CD4-positive, alpha-beta memory T cell (primary cell): ENCODE measurements at regions of chr16 and their contacts with region 1.

Region 1: DNA sequence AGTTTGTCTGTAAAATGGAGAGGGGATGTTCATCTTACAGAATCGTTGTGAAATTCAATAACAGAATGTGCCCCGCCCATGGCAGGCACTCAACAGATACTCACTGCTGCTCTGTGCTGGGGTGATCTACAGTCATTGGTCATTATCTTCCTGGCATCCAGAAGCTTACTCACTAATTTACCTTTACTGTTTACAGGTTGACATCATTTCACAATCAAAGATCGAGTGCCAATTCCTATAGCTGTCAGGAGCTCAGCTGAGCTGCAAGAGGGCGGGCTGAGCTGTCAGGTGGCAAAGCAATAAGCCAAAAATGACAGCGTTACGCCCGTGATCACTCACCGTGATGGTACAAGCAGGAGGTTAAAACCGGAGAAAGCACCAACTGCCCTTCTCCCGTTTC is 51.2 kb downstream of the LITAF start:
- DNase-seq: no peak
- H3K4me3 ChIP-seq: no peak overlapping the region
- H3K4me3 Mint-ChIP-seq: no peak overlapping the region
- H3K27ac ChIP-seq: no peak overlapping the region
- H3K27ac Mint-ChIP-seq: no peak overlapping the region
- H3K4me1 ChIP-seq: no peaks in the 10 kb centered on the region
- H3K4me1 Mint-ChIP-seq: peaks cover 5 to 11% (median 10%) of the 10 kb centered on the region in 4 donors
- H3K27me3 ChIP-seq: no peaks in the 10 kb centered on the region
- H3K27me3 Mint-ChIP-seq: no peaks in the 10 kb centered on the region

Region 2: GRCh38 chr16:11396241-11397048 is 139.0 kb before region 1 on chr16:
- CTCF ChIA-PET with region 1: interaction called, 5 read pairs
- POLR2A ChIA-PET with region 1: no interaction called
- intact Hi-C with region 1: loop called (anchors 2 kb)
- DNase-seq: peak; percentile 51 to 65 (median 54)
- H3K4me3 ChIP-seq: no peak overlapping the region
- H3K4me3 Mint-ChIP-seq: no peak overlapping the region
- H3K27ac ChIP-seq: no peak overlapping the region
- H3K27ac Mint-ChIP-seq: peak overlapping the region in 1 of 7 donors; percentile 24
- H3K4me1 ChIP-seq: peaks cover 5% of the 10 kb centered on the region
- H3K4me1 Mint-ChIP-seq: peaks cover 0 to 5% (median 1%) of the 10 kb centered on the region in 4 donors
- H3K27me3 ChIP-seq: no peaks in the 10 kb centered on the region
- H3K27me3 Mint-ChIP-seq: no peaks in the 10 kb centered on the region

Region 3: GRCh38 chr16:11407047-11407982 is 128.2 kb before region 1 on chr16:
- CTCF ChIA-PET with region 1: interaction called, 12 read pairs
- POLR2A ChIA-PET with region 1: no interaction called
- intact Hi-C with region 1: loop called (anchors 1 kb)
- DNase-seq: peak; percentile 61 to 75 (median 67)
- H3K4me3 ChIP-seq: no peak overlapping the region
- H3K4me3 Mint-ChIP-seq: peak overlapping the region in 1 of 8 donors; percentile 48
- H3K27ac ChIP-seq: no peak overlapping the region
- H3K27ac Mint-ChIP-seq: peak overlapping the region in 2 of 7 donors; percentile 80 to 84
- H3K4me1 ChIP-seq: no peaks in the 10 kb centered on the region
- H3K4me1 Mint-ChIP-seq: peaks cover 0 to 6% (median 4%) of the 10 kb centered on the region in 4 donors
- H3K27me3 ChIP-seq: no peaks in the 10 kb centered on the region
- H3K27me3 Mint-ChIP-seq: no peaks in the 10 kb centered on the region

Region 4: DNA sequence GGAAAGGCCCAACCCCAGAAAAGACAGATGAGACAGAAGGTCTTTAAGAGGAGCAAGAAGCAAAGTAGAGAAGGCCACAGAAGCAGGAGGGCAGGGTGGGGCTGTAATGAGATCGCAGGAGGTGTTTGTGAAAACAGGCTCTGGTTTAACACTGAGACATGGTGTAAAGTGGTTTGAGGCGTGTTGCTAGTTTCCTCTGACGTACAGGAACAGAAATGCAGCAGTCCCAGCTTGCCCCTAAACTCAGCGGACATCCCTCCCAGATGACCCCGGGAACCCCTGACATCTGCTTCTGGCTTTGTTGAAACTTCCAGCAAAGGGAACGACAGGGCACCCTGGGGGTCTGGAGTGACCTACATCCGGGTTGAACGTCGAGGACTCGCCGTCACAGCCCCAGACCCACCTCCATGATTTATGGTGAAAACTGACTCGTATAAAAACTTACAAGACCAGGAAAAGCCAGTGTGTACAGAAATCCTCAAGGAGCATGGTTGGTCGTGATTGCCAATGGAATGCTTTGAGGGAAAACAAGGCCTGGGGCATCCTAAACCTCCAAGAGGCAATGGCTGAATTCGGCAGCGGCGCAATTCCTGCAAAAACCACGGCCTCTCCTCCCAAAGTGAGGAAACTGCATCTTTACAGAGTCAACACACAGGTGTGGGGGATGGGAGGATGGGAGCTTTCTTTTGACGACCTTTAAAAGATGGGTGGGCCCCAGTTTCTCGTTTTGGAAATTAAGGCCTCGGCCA is 25.4 kb after region 1 on chr16:
- CTCF ChIA-PET with region 1: interaction called, 22 read pairs
- POLR2A ChIA-PET with region 1: interaction called, 6 read pairs
- intact Hi-C with region 1: loop called (anchors 1 kb)
- DNase-seq: peak; percentile 84 to 95 (median 86)
- H3K4me3 ChIP-seq: peak overlapping the region; percentile 37 to 60
- H3K4me3 Mint-ChIP-seq: peak overlapping the region; percentile 59 to 91 (median 79)
- H3K27ac ChIP-seq: peak overlapping the region; percentile 86
- H3K27ac Mint-ChIP-seq: peak overlapping the region; percentile 92 to 100 (median 95)
- H3K4me1 ChIP-seq: peaks cover 89% of the 10 kb centered on the region
- H3K4me1 Mint-ChIP-seq: peaks cover 54 to 91% (median 71%) of the 10 kb centered on the region in 4 donors
- H3K27me3 ChIP-seq: no peaks in the 10 kb centered on the region
- H3K27me3 Mint-ChIP-seq: no peaks in the 10 kb centered on the region

Region 5: DNA sequence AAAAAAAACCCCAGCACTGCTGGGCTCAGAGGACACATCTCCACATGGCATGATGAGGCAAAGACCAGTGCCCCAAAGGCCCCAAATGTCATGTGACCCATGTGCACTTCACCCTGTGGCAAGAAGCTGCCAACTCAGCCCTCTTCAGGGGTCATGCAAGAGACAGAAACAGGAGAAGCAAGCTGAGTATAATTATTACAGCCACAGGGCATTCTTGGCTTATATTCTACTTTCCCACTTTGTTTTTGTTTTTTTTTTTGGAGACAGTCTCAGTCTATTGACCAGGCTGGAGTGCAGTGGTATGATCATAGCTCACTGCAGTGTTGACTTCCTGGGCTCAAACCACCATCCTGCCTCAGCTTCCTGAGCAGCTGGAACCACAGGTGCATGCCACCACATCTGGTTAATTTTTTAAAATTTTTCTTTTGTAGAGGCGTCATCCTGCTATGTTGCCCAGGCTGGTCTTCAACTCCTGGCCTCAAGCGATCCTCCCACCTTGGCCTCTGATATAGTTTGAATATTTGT is 83.9 kb after region 1 on chr16:
- CTCF ChIA-PET with region 1: interaction called, 32 read pairs
- POLR2A ChIA-PET with region 1: interaction called, 6 read pairs
- intact Hi-C with region 1: no loop called
- DNase-seq: peak; percentile 42 to 60 (median 57)
- H3K4me3 ChIP-seq: peak overlapping the region in 1 of 2 donors; percentile 25
- H3K4me3 Mint-ChIP-seq: peak overlapping the region; percentile 20 to 83 (median 72)
- H3K27ac ChIP-seq: peak overlapping the region; percentile 29
- H3K27ac Mint-ChIP-seq: peak overlapping the region; percentile 75 to 97 (median 93)
- H3K4me1 ChIP-seq: peaks cover 73% of the 10 kb centered on the region
- H3K4me1 Mint-ChIP-seq: peaks cover 32 to 66% (median 51%) of the 10 kb centered on the region in 4 donors
- H3K27me3 ChIP-seq: no peaks in the 10 kb centered on the region
- H3K27me3 Mint-ChIP-seq: no peaks in the 10 kb centered on the region

Region 6: DNA sequence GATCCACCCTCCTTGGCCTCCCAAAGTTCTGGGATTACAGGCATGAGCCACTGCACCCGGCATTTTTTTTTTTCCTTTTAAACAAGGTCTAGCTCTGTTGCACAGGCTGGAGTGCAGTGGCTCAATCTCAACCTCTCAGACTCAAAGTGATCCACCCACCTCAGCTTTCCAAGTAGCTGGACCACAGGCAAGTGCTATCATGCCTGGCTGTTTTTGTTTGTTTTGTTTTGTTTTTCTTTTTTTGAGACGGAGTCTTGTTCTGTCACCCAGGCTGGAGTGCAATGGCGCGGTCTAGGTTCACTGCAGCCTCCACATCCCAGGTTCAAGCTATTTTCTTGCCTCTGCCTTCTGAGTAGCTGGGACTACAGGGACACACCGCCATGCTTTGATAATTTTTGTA is 280.6 kb after region 1 on chr16:
- CTCF ChIA-PET with region 1: no interaction called
- POLR2A ChIA-PET with region 1: no interaction called
- intact Hi-C with region 1: loop called (anchors 2 kb)
- DNase-seq: no peak
- H3K4me3 ChIP-seq: no peak overlapping the region
- H3K4me3 Mint-ChIP-seq: no peak overlapping the region
- H3K27ac ChIP-seq: no peak overlapping the region
- H3K27ac Mint-ChIP-seq: no peak overlapping the region
- H3K4me1 ChIP-seq: no peaks in the 10 kb centered on the region
- H3K4me1 Mint-ChIP-seq: peaks cover 2 to 5% (median 4%) of the 10 kb centered on the region in 4 donors
- H3K27me3 ChIP-seq: no peaks in the 10 kb centered on the region
- H3K27me3 Mint-ChIP-seq: peaks cover 0 to 2% of the 10 kb centered on the region in 2 donors

Region 7: GRCh38 chr16:12002447-12003006 is 467.1 kb after region 1 on chr16:
- CTCF ChIA-PET with region 1: no interaction called
- POLR2A ChIA-PET with region 1: no interaction called
- intact Hi-C with region 1: no loop called
- DNase-seq: no peak
- H3K4me3 ChIP-seq: no peak overlapping the region
- H3K4me3 Mint-ChIP-seq: no peak overlapping the region
- H3K27ac ChIP-seq: no peak overlapping the region
- H3K27ac Mint-ChIP-seq: no peak overlapping the region
- H3K4me1 ChIP-seq: no peaks in the 10 kb centered on the region
- H3K4me1 Mint-ChIP-seq: peaks cover 0 to 3% (median 1%) of the 10 kb centered on the region in 4 donors
- H3K27me3 ChIP-seq: no peaks in the 10 kb centered on the region
- H3K27me3 Mint-ChIP-seq: no peaks in the 10 kb centered on the region